ENCODE measurements at regions of chr1 and their contacts with region 1.

Region 1: DNA sequence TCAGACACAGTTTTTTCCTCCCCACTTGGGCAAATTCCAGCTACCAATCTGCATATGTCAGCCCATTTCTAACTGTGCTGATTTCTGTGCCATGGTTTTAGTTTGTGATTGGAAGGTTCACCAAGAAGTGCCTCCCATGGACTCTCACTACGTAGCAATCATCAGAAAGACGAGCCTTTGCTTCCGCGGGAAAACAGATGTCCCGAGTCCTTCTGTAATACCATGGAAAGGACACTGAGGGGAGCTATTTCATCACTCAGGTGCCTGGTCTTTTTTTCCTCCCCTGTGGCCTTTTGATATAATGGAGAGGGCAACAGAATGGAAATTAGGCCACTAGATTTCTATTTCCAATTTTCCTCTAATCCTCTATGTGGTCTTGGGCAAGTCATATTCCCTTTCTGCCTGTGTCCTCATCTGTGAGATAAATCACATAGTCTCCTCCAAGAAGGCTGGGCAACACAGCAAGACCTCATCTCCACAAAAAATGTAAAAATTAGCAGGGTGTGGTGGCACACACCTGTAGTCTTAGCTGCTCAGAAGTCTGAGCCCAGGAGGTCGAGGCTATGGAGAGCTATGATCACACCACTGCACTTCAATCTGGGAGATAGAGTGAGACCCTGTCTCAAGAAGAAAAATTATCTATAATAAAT is 24.8 kb downstream of the LEMD1 start:
- DNase-seq: no peak
- H3K4me3 ChIP-seq: no peak overlapping the region
- H3K27me3 ChIP-seq: no peaks in the 10 kb centered on the region
- CTCF ChIP-seq: peak; percentile 54

Region 2: GRCh38 chr1:205211169-205211838 is 185.8 kb before region 1 on chr1 and contains the start of gene DSTYK:
- CTCF ChIA-PET with region 1: no interaction called
- POLR2A ChIA-PET with region 1: no interaction called
- DNase-seq: peak; percentile 72
- H3K4me3 ChIP-seq: peak within 1 kb of the TSS; percentile 95
- H3K27me3 ChIP-seq: no peaks in the 10 kb centered on the region
- CTCF ChIP-seq: no peak
- polyA plus RNA-seq, gene DSTYK: 9.7 and 11.5 TPM in 2 replicates

Region 3: DNA sequence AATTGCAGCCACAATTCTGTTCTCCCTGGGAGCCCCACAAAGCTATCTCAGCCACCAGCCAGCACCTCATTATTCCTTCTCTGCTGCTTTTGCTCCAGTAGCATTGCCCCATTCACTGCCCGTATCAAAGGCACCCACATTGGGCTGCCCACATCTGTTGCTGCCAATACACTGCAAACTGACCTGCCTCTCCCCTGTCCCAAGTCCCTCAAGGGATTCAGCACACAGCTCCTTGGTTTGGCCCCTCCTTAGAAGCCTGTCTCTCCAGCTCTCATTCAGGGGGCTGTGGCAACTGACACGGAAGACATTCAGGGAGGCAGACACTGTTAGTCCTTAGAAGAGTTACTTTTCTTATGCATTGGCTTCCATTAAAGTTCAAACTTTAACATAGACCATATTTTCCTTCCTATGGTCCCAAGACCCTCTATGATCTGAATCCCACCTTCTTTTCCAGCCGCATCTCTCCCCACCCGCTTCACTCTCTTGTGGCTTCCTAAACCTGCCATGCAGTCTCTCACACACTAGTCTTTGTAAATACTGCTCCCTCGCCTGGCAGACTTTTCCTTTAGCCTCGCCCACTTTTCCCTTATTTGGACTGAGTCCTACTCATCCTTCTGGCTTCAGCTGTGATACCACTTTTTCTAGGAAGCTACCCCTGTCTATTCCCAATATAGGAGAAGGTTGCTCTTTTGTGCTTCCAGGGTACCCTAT is 21.1 kb before region 1 on chr1:
- CTCF ChIA-PET with region 1: no interaction called
- POLR2A ChIA-PET with region 1: no interaction called
- DNase-seq: peak; percentile 10
- H3K4me3 ChIP-seq: no peak overlapping the region
- H3K27me3 ChIP-seq: peaks cover 3% of the 10 kb centered on the region; the same call in 1 of the 2 replicates
- CTCF ChIP-seq: 0 out of 2 replicates have a peak, but pooled peaks have one; percentile 3

Region 4: DNA sequence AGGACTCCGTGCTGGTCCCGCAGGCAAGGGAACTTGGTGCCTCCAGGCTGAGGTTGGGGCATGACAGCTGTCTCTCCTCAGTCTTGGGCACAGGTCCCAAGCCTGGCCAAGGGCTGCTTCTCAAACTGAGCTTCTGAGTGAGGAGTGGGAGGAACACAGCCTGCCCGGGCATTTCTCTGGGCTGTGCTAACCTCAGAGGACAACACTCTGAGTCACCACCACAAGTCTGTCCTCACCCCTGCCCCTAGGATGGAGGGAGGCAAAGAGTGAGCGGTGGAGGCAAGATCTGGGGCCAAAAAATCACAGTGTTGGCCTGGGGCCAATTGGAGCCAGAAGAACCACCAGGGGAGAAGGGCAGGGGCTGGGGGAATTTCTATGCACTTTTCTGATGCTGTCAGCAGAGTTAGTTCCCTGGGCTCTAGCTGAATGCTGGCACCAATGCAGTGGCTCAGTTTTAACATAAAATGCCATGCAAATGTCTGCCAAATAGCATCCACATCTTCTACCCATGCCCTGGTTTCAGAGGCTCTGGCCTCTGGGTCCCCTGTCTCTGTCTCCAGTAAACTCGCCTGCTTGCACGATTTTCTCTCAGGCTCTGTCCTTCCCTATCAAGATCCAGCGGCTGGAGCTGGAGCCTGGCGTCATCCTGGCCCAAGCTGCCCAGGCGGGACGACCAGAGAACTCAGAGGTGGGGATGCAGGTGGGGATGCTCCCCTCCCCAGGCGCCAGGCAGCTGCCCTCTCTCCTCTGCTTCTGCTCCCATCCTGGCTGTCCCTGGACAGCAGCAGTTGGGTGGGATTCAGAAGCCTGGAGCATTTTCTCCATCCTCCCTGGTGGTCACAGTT is 96.4 kb after region 1 on chr1:
- CTCF ChIA-PET with region 1: interaction called, 65 read pairs
- POLR2A ChIA-PET with region 1: no interaction called
- DNase-seq: peak; percentile 7
- H3K4me3 ChIP-seq: no peak overlapping the region
- H3K27me3 ChIP-seq: peaks cover 23% of the 10 kb centered on the region
- CTCF ChIP-seq: no peak

Region 5: GRCh38 chr1:205775015-205775716 is 378.1 kb after region 1 on chr1 and contains the start of gene RAB29:
- CTCF ChIA-PET with region 1: no interaction called
- POLR2A ChIA-PET with region 1: no interaction called
- DNase-seq: peak; percentile 44
- H3K4me3 ChIP-seq: peak within 1 kb of the TSS; percentile 78
- H3K27me3 ChIP-seq: no peaks in the 10 kb centered on the region
- CTCF ChIP-seq: no peak
- polyA plus RNA-seq, gene RAB29: 12.1 and 13.4 TPM in 2 replicates

Region 6: GRCh38 chr1:207309775-207310273 is 1912.7 kb after region 1 on chr1:
- CTCF ChIA-PET with region 1: no interaction called
- POLR2A ChIA-PET with region 1: no interaction called
- DNase-seq: no peak
- H3K4me3 ChIP-seq: no peak overlapping the region
- H3K27me3 ChIP-seq: no peaks in the 10 kb centered on the region
- CTCF ChIP-seq: no peak